Cardiac septum (tissue), 1 donor: ENCODE measurements at regions of chr9 and their contacts with region 1.

Region 1: DNA sequence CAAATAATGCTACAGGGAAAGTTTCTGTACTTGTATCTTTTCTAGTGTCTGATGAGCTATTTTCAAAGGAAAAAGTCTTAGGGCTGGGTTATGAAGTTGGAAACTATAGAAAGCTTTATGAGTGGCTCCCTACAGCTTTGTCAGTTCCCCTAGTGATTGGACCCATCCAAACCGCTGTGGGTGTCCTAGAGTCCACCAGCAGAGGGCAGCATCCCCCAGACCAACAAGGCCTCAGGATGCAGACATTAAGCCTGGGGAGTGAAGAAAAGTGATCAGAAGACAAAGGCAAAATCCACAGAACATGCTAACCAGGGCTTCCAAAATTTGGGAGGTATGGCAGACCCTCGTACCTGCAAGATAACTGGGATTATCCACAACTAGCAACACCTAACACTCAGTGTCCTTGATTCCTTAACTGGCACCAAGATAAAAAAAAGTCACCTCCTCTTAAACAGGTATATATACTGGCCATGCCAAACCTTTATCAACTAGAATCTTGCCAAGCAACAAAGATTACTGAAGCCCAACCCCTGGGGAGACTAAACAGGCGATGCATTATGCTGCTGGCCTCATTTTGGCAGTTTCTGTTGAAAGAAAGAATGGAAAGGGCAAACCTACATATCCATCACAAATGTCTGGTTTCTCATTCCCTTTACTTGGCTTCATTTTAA is 110.4 kb upstream of the NR5A1 start:
- DNase-seq: peak; percentile 82

Region 2: DNA sequence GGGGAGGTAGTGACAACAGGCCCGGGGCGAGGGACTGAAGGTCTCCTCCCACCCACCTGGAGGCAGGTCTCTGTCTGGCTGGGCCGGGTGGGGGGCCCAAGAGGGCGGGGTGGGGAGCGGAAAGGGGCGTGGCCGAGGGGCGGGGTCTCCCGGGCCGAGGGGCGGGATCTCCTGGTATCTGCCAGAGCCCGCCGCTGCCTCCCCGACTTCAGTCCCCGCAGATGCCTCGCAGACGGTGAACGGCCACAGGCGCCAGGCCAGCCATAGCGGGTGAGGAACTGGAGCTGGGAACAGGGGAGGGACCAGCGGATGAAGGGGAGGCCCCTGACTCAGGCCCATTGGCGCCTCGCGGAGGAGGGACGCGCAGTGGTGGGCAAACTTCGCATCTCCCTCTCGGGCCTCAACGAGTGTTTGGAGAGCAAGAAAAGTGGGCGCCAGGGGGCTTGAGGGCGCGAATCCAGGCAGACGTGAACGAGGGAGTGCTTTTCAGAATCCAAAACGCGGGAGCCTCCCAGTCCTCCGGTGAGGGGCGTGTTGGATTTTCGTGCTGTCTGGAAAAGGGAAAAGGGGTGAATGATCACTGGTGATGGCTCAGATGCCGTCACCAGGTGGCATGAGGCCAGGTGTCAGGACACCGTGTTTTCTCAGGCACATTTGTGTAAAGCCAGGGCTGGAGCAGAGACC is 167.2 kb before region 1 on chr9 and contains the start of gene ADGRD2:
- intact Hi-C with region 1: no loop called
- DNase-seq: peak; percentile 64
- total RNA-seq, gene ADGRD2: not detected

Region 3: GRCh38 chr9:124551472-124552272 is 65.9 kb before region 1 on chr9:
- intact Hi-C with region 1: loop called (anchors 5 kb)
- DNase-seq: no peak

Region 4: DNA sequence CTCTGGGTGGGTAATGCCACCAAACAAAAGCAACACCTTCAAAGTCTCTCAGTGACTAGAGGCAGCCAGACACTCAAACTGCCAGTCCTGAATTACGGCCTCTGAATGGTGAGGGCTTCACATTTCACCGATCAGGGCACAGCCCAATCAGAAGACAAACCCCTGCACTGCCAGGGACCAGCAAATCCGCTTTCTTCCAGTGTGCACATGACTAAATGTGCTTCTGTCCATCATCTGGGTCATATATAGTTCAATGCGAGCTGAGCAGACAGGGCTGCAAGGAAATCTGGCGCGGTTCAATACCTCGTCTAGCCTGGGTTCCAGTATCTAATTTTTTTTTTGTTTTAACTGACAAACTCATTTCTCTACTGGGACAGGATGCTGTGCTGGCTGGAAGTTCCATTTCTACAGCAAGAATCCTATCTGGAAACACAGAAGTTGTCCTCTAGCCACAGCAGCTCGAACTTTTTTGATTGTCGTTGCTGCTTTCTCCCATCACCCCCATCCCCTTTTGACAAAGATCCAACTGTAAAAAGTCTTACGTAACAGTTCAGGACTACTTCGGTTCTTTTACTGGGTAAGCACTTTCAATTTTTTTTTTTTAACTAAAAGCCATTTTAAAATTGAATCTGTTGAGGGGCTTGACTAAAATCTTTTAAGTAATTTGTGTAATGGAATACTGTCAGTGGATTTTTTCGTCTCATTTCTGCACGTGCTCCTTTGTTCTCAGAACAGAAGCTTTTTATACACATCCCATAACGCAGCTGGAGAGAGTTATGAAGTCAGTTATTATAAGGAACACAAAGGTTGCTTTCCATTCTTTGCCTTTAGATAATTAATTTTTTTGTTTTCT is 40.8 kb after region 1 on chr9:
- intact Hi-C with region 1: loop called (anchors 5 kb)
- DNase-seq: peak; percentile 79

Region 5: GRCh38 chr9:124710766-124711165 is 93.2 kb after region 1 on chr9:
- intact Hi-C with region 1: loop called (anchors 1 kb)
- DNase-seq: no peak

Region 6: GRCh38 chr9:125694478-125694877 is 1076.9 kb after region 1 on chr9:
- intact Hi-C with region 1: no loop called
- DNase-seq: no peak